Calu3 (cell line): ENCODE measurements at regions of chr14 and their contacts with region 1.

Region 1: GRCh38 chr14:65412032-65412846 is at the start of gene FUT8:
- DNase-seq: peak; percentile 98
- H3K4me3 Mint-ChIP-seq: peak within 1 kb of the TSS; percentile 79
- H3K27ac Mint-ChIP-seq: peak within 1 kb of the TSS; percentile 78
- H3K4me1 Mint-ChIP-seq: peaks cover 8% of the 10 kb centered on the region
- H3K27me3 Mint-ChIP-seq: no peaks in the 10 kb centered on the region
- CTCF ChIP-seq: peak; percentile 11
- total RNA-seq, gene FUT8: 85.7 and 129 TPM in 2 replicates

Region 2: GRCh38 chr14:65229751-65230749 is 182.2 kb before region 1 on chr14:
- CTCF ChIA-PET with region 1: interaction called, 13 read pairs
- intact Hi-C with region 1: loop called (anchors 2 kb)
- DNase-seq: peak; percentile 76
- H3K4me3 Mint-ChIP-seq: peak overlapping the region; percentile 66
- H3K27ac Mint-ChIP-seq: peak overlapping the region; percentile 97
- H3K4me1 Mint-ChIP-seq: peaks cover 75% of the 10 kb centered on the region
- H3K27me3 Mint-ChIP-seq: no peaks in the 10 kb centered on the region
- CTCF ChIP-seq: no peak

Region 3: DNA sequence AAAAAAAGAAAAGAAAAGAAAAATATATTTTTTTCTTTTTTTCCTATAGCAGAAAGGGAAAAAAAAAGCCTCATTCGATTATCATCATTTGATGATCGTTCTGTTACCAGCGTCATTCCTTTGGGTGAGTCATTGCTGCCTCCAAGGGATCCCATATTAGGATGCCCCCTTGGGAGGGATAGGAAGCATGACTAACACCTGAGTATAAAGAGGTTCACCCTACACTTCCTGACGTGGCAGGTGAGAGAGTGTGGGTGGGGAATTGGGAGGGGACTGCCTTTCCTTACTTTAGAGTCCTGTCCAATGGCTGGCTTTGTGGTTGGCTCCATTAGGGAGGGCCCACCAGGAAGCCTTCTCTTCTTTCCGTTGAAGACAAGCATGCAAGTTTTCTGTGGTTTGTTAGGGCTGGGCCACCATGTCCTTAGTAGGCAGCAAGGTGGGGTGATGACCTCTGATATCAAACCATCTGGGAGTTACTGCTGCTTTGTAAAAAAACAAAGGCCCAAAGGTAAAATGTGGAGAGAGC is 55.8 kb before region 1 on chr14:
- CTCF ChIA-PET with region 1: no interaction called
- intact Hi-C with region 1: loop called (anchors 1 kb)
- DNase-seq: peak; percentile 82
- H3K4me3 Mint-ChIP-seq: no peak overlapping the region
- H3K27ac Mint-ChIP-seq: peak overlapping the region; percentile 83
- H3K4me1 Mint-ChIP-seq: peaks cover 28% of the 10 kb centered on the region
- H3K27me3 Mint-ChIP-seq: no peaks in the 10 kb centered on the region
- CTCF ChIP-seq: no peak

Region 4: GRCh38 chr14:65453807-65454480 is 41.7 kb after region 1 on chr14:
- CTCF ChIA-PET with region 1: no interaction called
- intact Hi-C with region 1: no loop called
- DNase-seq: no peak
- H3K4me3 Mint-ChIP-seq: no peak overlapping the region
- H3K27ac Mint-ChIP-seq: no peak overlapping the region
- H3K4me1 Mint-ChIP-seq: peaks cover 17% of the 10 kb centered on the region
- H3K27me3 Mint-ChIP-seq: no peaks in the 10 kb centered on the region
- CTCF ChIP-seq: no peak

Region 5: DNA sequence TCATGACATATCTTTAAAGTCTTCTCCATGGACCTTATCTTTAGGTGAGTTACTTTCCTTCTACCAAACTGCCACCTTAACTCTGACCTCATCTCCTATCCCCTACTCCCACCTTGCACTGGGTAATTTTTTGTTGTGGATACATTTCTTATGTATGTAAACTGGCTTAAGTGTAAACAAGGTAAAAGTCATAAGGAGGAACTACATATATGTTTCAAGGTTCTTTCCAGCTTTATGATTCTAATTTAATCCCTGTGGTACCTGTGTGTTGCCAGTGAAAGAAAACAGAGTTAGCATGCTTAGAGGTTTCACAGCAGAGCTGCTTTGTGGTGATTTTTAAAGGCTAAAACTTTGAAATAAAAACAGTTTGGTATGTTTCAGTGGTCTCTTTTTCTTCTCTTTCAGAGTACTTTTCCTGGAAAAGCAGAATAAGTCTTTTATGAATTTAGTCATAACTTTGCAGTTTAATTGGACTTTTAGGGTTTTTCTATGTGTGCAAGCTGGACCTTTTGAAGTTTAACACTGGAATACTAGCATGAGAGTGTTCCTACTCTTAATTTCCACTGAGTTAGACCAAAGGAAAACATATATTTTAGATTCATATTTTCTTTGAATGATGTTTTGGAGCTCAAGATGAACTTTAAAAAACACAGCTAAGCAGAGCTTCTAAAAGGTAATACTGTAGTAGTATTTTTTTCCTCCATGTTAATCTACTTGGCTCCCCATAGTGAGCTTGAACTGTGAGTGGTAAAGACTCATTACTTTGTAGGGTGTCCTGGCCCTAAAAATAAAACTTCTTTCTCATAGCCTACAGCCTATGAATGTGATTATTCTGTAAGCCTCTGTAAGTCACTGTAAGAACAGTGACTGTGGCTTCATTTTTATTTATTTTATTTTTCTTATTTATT is 105.7 kb after region 1 on chr14:
- CTCF ChIA-PET with region 1: no interaction called
- intact Hi-C with region 1: no loop called
- DNase-seq: no peak
- H3K4me3 Mint-ChIP-seq: no peak overlapping the region
- H3K27ac Mint-ChIP-seq: peak overlapping the region; percentile 41
- H3K4me1 Mint-ChIP-seq: no peaks in the 10 kb centered on the region
- H3K27me3 Mint-ChIP-seq: no peaks in the 10 kb centered on the region
- CTCF ChIP-seq: no peak

Region 6: GRCh38 chr14:65824285-65824977 is 412.2 kb after region 1 on chr14:
- CTCF ChIA-PET with region 1: interaction called, 60 read pairs
- intact Hi-C with region 1: loop called (anchors 1 kb)
- DNase-seq: peak; percentile 67
- H3K4me3 Mint-ChIP-seq: no peak overlapping the region
- H3K27ac Mint-ChIP-seq: no peak overlapping the region
- H3K4me1 Mint-ChIP-seq: no peaks in the 10 kb centered on the region
- H3K27me3 Mint-ChIP-seq: peaks cover 38% of the 10 kb centered on the region
- CTCF ChIP-seq: peak; percentile 78

Region 7: GRCh38 chr14:65958664-65959562 is 546.7 kb after region 1 on chr14:
- CTCF ChIA-PET with region 1: interaction called, 17 read pairs
- intact Hi-C with region 1: loop called (anchors 2 kb)
- DNase-seq: no peak
- H3K4me3 Mint-ChIP-seq: no peak overlapping the region
- H3K27ac Mint-ChIP-seq: no peak overlapping the region
- H3K4me1 Mint-ChIP-seq: no peaks in the 10 kb centered on the region
- H3K27me3 Mint-ChIP-seq: peaks cover 32% of the 10 kb centered on the region
- CTCF ChIP-seq: peak; percentile 17